Activated naive CD4-positive, alpha-beta T cell treated with anti-CD3 and anti-CD28 coated beads for 36 hours (primary cell): ENCODE measurements at regions of chr20 and their contacts with region 1.

Region 1: DNA sequence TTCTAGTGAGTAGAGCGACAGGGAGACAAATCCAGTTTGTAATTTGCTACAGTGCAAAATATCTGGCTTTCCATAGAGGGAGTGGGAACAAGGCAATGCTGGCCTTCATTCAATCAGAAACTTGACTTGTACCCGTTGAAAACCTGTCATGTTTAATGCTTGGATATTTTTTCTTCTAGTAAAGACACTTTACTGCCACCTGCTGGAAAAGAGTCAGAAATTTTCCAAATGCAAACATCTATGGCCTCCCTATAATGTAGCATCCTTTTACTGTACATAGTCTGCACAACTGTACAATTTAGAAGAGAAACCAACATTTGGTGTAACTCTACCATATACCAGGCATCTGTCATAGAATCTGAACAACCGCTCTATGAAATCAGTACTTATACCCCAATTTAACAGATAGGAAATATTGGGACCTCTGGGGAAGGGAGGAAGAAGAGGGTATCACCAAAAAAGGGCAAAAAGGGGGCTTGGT is 16.7 kb upstream of the TBC1D20 start:
- DNase-seq: peak; percentile 41
- H3K4me3 Mint-ChIP-seq: no peak overlapping the region
- H3K27ac Mint-ChIP-seq: no peak overlapping the region
- H3K4me1 Mint-ChIP-seq: peaks cover 22% of the 10 kb centered on the region
- H3K27me3 Mint-ChIP-seq: no peaks in the 10 kb centered on the region

Region 2: DNA sequence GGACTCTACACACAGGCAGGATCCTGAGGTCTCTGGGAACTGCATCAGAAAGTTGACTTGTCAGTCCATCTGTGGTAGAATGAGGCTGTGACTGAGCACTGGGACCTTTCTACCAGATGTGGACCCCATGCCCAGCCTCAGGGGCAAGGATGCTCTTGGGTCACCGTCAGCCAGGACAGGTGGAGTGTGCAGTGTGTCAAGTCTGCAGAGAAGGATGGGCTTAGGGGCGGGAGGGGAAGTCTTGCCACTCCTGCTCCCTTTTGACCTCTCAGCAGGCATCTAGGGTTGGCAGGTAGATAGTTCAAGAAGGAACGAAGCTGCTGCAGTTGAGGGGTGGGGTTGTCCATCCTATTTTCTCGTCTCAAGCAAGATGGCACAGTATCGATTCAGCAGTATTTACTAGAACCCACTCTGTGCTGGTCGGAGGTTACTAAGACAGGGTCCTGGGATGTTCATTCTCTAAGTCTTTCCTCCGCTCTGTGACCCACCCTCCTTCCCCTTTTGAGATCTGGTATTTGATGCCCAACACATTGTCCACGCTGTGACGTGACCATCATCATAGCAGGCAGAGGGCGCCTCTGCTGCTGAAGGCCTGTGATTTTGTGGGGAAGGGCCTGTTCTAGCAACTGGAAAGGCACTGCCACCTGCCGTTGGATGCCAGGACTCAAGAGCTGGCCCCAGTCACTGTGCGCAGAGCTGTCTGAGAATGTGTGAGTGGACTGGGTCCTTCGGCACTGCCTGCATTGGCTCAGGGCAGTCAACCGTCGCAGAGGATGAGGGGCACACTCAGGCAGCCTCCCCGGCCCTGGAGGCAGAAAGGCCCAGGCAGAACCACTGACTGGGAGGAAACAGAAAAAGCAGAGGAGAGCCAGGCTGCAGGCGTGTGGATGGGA is 47.7 kb before region 1 on chr20:
- CTCF ChIA-PET with region 1: interaction called, 8 read pairs
- intact Hi-C with region 1: loop called (anchors 1 kb)
- DNase-seq: peak; percentile 75
- H3K4me3 Mint-ChIP-seq: no peak overlapping the region
- H3K27ac Mint-ChIP-seq: peak overlapping the region; percentile 89
- H3K4me1 Mint-ChIP-seq: peaks cover 57% of the 10 kb centered on the region
- H3K27me3 Mint-ChIP-seq: no peaks in the 10 kb centered on the region

Region 3: GRCh38 chr20:438571-439469 is 40.2 kb before region 1 on chr20:
- CTCF ChIA-PET with region 1: interaction called, 4 read pairs
- intact Hi-C with region 1: loop called (anchors 2 kb)
- DNase-seq: peak; percentile 79
- H3K4me3 Mint-ChIP-seq: peak overlapping the region; percentile 74
- H3K27ac Mint-ChIP-seq: peak overlapping the region; percentile 91
- H3K4me1 Mint-ChIP-seq: peaks cover 55% of the 10 kb centered on the region
- H3K27me3 Mint-ChIP-seq: no peaks in the 10 kb centered on the region

Region 4: GRCh38 chr20:577167-577791 is 98.3 kb after region 1 on chr20:
- CTCF ChIA-PET with region 1: no interaction called
- intact Hi-C with region 1: no loop called
- DNase-seq: no peak
- H3K4me3 Mint-ChIP-seq: no peak overlapping the region
- H3K27ac Mint-ChIP-seq: no peak overlapping the region
- H3K4me1 Mint-ChIP-seq: no peaks in the 10 kb centered on the region
- H3K27me3 Mint-ChIP-seq: peaks cover 20% of the 10 kb centered on the region